ENCODE measurements at regions of chr19 and their contacts with region 1.

Region 1: DNA sequence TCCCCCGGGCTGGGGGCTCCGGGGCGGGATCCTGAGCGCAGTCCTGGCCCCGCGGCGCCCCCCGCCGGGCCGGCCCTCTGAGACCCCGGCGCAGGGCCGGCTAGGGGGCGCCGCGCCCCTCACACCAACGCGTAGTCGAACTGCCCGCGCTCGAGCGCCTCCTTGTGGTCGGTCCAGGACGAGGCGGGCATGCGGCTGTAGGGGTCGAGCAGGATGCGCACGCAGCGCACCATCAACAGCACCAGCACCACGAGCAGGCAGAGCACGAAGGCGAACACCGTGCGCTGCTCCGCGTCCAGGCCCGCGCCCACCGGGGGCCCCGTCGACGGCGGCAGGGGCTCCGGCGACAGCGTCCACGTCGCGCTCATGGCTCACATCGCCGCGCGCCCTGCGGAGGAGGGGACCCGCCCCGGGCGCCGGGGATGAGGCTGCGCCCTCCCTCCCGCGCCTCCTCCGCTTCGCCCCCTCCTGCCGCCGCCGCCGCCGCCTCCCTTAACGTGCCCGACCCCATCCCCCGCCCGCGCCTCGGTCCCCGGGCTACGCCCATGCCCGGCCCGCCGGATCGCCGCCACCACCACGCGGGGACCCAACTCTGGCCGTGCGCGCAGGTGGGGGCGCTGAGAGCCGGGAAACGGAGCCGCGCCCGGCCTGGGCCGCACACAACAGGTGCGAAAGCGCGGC is 624 bp downstream of the CTXN1 start:
- DNase-seq: peak; percentile 72 to 85
- H3K4me3 ChIP-seq: peak overlapping the region; percentile 28
- H3K4me3 Mint-ChIP-seq: peak overlapping the region; percentile 82
- H3K27ac Mint-ChIP-seq: no peak overlapping the region
- H3K4me1 ChIP-seq: peaks cover 23% of the 10 kb centered on the region
- H3K4me1 Mint-ChIP-seq: peaks cover 10% of the 10 kb centered on the region
- H3K27me3 ChIP-seq: no peaks in the 10 kb centered on the region
- H3K27me3 Mint-ChIP-seq: no peaks in the 10 kb centered on the region
- CTCF ChIP-seq: peak; percentile 84

Region 2: DNA sequence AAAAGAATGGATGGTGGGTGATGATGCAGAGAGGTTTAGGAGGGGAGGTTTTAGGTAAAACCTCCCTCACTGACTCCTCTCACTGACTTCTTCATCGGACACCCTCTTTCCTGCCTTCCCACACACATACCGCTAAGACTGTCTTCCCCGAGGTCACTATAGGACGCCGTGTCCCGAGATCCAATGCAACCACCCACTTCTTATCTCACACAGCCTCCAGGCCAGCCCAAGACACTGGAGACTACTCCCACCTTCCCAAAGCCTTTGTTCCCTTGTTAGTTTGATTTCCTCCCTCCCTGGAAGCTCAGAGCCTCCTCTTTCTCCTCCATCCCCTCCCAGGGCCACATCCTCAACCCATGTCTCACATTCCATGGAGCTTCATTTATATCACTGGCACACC is 346.1 kb before region 1 on chr19:
- CTCF ChIA-PET with region 1: no interaction called
- POLR2A ChIA-PET with region 1: interaction called, 12 read pairs
- intact Hi-C with region 1: no loop called
- DNase-seq: no peak
- H3K4me3 ChIP-seq: no peak overlapping the region
- H3K4me3 Mint-ChIP-seq: no peak overlapping the region
- H3K27ac Mint-ChIP-seq: no peak overlapping the region
- H3K4me1 ChIP-seq: no peaks in the 10 kb centered on the region
- H3K4me1 Mint-ChIP-seq: no peaks in the 10 kb centered on the region
- H3K27me3 ChIP-seq: no peaks in the 10 kb centered on the region
- H3K27me3 Mint-ChIP-seq: peaks cover 11% of the 10 kb centered on the region
- CTCF ChIP-seq: no peak

Region 3: DNA sequence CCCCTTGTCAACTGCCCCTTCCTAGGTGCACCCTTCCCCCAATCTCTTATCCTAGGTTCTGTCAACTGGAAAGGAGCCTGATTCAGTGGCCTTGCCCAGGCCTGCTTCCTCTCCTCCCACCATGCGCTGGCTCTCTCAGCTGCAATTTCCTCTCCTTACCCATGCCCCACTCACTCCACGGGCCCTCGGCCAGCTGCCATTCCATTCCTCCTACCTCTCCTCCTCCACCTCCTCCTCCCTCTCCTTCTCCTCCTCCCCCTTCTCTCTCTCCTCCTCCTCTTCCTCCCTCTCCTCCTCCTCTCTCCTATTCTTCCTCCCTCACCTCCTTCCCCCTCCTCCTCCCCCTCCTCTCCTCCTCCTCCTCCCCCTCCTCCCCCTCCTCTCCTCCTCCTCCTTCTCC is 27.7 kb after region 1 on chr19:
- CTCF ChIA-PET with region 1: no interaction called
- POLR2A ChIA-PET with region 1: interaction called, 15 read pairs
- intact Hi-C with region 1: no loop called
- DNase-seq: no peak
- H3K4me3 ChIP-seq: no peak overlapping the region
- H3K4me3 Mint-ChIP-seq: no peak overlapping the region
- H3K27ac Mint-ChIP-seq: peak overlapping the region; percentile 60
- H3K4me1 ChIP-seq: no peaks in the 10 kb centered on the region; the same call in 1 of the 2 replicates
- H3K4me1 Mint-ChIP-seq: peaks cover 11% of the 10 kb centered on the region
- H3K27me3 ChIP-seq: no peaks in the 10 kb centered on the region
- H3K27me3 Mint-ChIP-seq: no peaks in the 10 kb centered on the region
- CTCF ChIP-seq: no peak